Activated naive CD4-positive, alpha-beta T cell treated with anti-CD3 and anti-CD28 coated beads, Interleukin-2, amount 10 ng/mL, durations not matched to agents 7 days and 5 days (primary cell): ENCODE measurements at regions of chr14 and their contacts with region 1.

Region 1: DNA sequence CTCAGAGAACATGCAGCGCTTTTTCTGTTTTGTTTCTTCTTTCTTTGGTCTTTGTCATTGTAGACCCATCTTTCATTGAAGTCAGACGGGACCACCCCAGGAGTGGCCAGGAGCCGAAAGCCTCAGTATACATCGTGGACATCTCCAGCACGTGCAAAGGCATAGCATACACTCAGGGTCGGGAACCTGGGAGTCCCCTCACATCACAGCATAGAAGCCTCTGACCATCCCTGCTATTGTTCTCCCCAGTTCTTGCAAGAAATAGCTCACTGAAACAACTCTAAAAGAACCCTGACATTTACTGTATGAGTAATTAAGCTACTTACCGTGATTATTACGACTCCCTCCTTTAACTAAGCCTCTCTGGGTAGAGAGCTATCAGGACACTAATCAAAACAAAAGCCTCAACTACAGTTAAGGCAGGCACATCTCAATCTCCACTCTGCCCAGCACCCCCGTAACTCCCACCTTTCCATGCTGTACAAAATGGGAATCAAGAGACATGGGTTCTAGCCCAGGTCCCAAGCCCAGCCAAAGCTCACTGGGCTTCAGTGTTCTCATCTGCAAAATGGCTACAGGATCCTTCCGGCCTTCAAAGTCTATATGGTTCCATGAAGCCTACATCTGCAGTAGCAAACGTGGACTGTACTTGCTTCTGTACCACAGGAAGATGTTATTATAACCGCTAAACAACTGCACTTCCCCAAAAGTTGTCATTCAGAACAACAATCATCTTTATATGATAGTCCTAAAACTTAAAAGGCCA is 6.7 kb downstream of the CCDC88C start:
- DNase-seq: peak; percentile 29
- H3K4me3 Mint-ChIP-seq: peak overlapping the region; percentile 63
- H3K27ac Mint-ChIP-seq: peak overlapping the region; percentile 88
- H3K4me1 Mint-ChIP-seq: peaks cover 86% of the 10 kb centered on the region
- H3K27me3 Mint-ChIP-seq: no peaks in the 10 kb centered on the region

Region 2: DNA sequence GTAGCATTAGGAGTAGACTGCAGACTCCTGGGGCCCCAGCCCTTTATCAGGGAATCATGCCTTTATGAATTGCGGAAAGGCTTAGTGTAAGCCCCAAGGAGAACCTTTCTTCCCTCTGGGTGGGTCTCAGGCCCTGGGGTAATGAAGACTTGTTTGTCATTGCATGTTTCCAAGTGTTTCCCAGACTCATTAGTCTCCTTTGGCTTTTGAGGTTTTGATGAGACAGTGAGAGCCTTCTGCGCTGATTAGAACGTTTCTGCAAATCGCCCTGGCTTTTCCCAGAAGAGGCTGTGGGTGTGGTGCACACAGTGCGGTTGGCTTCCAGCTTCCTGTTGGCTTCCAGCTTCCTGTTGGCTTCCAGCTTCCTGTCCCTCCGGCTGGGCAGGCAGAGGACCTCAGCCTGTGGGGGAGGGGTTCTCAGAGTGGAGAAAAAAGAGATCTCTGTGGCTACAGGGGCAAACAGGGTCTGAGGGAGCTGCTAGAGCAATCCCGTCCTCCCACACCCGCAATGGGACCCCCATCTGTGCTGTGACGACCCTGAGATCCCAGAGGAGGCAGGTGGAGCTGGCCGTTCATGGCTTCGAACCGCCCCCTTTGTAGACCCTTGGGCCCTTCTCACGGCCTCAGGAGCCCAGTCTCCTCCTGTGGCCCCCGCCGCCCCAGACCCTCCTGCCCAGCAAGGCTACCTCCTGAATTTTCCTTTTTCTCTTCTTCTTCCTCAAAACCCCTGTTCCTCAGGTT is 208.6 kb before region 1 on chr14:
- CTCF ChIA-PET with region 1: no interaction called
- DNase-seq: peak; percentile 58
- H3K4me3 Mint-ChIP-seq: peak overlapping the region; percentile 34
- H3K27ac Mint-ChIP-seq: peak overlapping the region; percentile 88
- H3K4me1 Mint-ChIP-seq: peaks cover 77% of the 10 kb centered on the region
- H3K27me3 Mint-ChIP-seq: no peaks in the 10 kb centered on the region

Region 3: GRCh38 chr14:91396959-91397815 is 13.8 kb before region 1 on chr14:
- CTCF ChIA-PET with region 1: interaction called, 44 read pairs
- DNase-seq: peak; percentile 87
- H3K4me3 Mint-ChIP-seq: peak overlapping the region; percentile 72
- H3K27ac Mint-ChIP-seq: peak overlapping the region; percentile 90
- H3K4me1 Mint-ChIP-seq: peaks cover 93% of the 10 kb centered on the region
- H3K27me3 Mint-ChIP-seq: no peaks in the 10 kb centered on the region

Region 4: DNA sequence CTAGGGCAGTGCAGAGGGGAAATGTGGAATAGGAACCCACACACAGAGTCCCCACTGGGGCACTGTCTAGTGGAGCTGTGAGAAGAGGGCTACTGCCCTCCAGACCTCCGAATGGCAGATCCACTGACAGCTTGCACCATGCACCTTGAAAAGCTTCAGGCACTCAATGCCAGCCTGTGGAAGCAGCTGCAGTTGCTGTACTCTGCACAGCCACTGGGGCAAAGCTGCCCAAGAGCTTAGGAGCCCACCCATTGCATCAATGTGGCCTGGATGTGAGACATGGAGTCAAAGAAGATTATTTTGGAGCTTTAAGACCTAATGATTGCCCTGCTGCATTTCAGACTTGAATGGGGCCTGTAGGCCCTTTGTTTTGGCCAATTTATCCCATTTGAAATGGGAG is 28.4 kb after region 1 on chr14:
- CTCF ChIA-PET with region 1: no interaction called
- DNase-seq: no peak
- H3K4me3 Mint-ChIP-seq: no peak overlapping the region
- H3K27ac Mint-ChIP-seq: no peak overlapping the region
- H3K4me1 Mint-ChIP-seq: no peaks in the 10 kb centered on the region
- H3K27me3 Mint-ChIP-seq: peaks cover 29% of the 10 kb centered on the region

Region 5: GRCh38 chr14:91482263-91483013 is 71.5 kb after region 1 on chr14:
- CTCF ChIA-PET with region 1: no interaction called
- DNase-seq: no peak
- H3K4me3 Mint-ChIP-seq: no peak overlapping the region
- H3K27ac Mint-ChIP-seq: no peak overlapping the region
- H3K4me1 Mint-ChIP-seq: peaks cover 13% of the 10 kb centered on the region
- H3K27me3 Mint-ChIP-seq: no peaks in the 10 kb centered on the region